ENCODE measurements at regions of chr2 and their contacts with region 1.

Region 1: DNA sequence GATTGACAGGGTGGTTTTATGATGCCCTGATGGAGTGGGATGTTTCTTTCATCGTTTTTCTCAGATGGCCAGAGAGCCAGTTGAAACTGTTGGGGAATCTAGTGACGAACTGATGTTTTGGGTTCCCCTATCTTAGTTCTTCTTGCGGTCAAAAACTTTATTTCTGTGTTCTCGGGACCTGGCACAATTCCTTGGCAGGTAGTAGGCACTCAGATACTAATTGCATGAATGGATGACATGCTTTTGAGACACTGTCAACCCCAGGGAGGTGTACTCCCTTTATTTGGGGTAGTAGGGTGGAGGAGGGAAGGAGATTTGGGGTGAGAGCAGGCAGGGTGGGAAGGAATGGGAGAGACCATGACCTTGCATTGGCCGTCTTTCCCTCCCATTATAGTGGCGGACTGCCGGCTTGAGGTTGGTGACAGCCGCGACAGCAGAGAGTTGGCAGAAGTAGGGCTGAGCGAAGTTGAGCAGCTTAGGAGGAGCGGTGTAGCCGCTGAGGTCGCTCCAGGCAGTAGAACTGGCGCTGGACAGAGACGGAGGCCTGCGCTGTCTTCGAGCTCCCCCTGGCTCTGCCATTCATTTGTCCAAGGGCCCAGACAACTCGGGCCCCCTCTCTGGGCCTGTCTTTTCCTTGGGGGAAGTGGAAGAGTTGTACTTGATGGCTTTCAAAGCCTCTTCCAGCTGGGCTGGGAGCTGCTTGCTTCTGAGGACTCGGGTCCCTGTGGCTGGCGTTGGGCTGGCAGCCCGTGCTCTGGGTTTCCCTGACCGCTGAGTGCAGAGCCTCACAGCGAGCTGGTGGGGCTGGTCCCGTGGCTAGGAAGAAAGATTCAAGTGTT is 2.6 kb downstream of the TET3 start:
- DNase-seq: peak; percentile 63
- H3K4me3 Mint-ChIP-seq: peak overlapping the region; percentile 77
- H3K27ac Mint-ChIP-seq: peak overlapping the region; percentile 34
- H3K4me1 Mint-ChIP-seq: peaks cover 68% of the 10 kb centered on the region
- H3K27me3 Mint-ChIP-seq: peaks cover 19% of the 10 kb centered on the region

Region 2: DNA sequence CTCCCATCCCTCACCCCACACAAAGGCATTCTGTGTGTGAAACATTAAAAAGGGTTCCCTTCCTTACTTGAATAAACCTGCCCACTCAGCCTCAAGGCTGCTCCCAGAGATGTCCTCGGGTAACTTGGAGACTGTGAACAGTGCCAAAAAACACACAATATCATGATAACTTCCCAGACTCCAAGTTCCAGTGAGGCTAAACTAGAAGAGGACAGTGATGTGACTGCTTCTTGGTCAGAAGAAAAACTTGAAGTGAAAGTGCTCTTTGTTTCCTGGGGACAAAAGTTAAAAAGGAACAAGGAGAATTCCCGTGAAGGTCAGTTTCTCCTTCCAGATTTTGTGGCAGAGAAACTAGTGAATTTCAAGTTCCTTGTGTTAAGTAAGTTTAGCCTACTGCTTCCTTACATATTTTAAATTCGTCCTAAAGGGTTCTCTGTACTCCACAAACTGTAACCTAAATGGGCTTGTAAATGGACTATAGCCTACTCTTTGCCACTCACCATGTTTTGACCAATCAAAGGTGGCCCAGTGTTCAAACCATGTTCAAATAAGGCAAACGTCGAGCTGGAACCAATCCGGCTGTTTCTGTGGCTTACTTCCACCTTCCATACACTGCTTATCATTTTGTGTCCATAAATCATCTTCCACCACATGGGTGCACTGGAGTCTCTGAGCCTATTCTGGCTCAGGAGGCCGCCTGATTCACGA is 270.6 kb before region 1 on chr2:
- CTCF ChIA-PET with region 1: no interaction called
- DNase-seq: no peak
- H3K4me3 Mint-ChIP-seq: no peak overlapping the region
- H3K27ac Mint-ChIP-seq: no peak overlapping the region
- H3K4me1 Mint-ChIP-seq: no peaks in the 10 kb centered on the region
- H3K27me3 Mint-ChIP-seq: peaks cover 19% of the 10 kb centered on the region

Region 3: DNA sequence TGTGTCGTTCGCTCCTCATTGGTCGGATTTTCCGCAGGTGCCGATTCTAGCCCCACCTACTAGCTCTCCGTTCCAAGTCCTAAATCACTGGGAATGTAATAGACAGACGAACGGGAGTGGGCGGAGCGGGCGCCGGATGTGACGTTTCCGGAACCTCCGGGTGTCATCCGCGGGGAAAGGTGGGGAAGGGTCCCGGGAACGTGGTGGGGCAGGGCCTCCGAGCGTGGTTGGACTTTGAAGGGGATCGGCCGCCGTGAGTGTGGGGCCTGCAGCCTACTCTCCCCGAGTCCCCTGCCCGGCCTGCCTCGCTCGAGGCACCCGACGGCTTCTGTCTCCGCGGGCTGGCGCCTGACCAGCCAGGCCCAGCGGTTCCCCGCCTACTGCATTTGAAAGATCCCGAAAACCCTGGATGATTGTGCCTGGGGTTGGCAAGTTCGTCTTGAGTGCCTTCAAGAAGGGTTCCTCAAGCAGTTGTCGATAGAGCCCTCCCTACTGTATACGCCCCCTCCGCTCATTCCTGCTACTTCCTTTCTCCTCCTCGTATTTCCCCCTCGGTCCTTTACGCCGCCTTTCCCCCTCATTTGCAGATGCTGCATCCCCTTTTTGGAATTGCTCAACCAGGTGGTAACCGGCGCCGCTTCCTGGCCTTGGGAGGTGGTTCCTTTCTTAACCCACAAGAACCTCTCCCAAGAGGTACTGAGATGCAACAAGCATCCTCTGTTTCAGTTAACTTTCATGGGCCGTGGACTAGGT is 158.3 kb before region 1 on chr2 and contains the start of gene STAMBP:
- CTCF ChIA-PET with region 1: interaction called, 50 read pairs
- DNase-seq: peak; percentile 97
- H3K4me3 Mint-ChIP-seq: peak within 1 kb of the TSS; percentile 91
- H3K27ac Mint-ChIP-seq: peak within 1 kb of the TSS; percentile 94
- H3K4me1 Mint-ChIP-seq: peaks cover 40% of the 10 kb centered on the region
- H3K27me3 Mint-ChIP-seq: peaks cover 4% of the 10 kb centered on the region

Region 4: GRCh38 chr2:73920577-73921545 is 66.5 kb before region 1 on chr2:
- CTCF ChIA-PET with region 1: interaction called, 13 read pairs
- DNase-seq: peak; percentile 58
- H3K4me3 Mint-ChIP-seq: no peak overlapping the region
- H3K27ac Mint-ChIP-seq: no peak overlapping the region
- H3K4me1 Mint-ChIP-seq: peaks cover 18% of the 10 kb centered on the region
- H3K27me3 Mint-ChIP-seq: peaks cover 36% of the 10 kb centered on the region

Region 5: GRCh38 chr2:74001781-74002486 is 14.6 kb after region 1 on chr2:
- CTCF ChIA-PET with region 1: interaction called, 13 read pairs
- DNase-seq: no peak
- H3K4me3 Mint-ChIP-seq: peak overlapping the region; percentile 70
- H3K27ac Mint-ChIP-seq: no peak overlapping the region
- H3K4me1 Mint-ChIP-seq: peaks cover 59% of the 10 kb centered on the region
- H3K27me3 Mint-ChIP-seq: peaks cover 13% of the 10 kb centered on the region

Region 6: GRCh38 chr2:74147727-74148456 is 160.6 kb after region 1 on chr2 and contains the start of gene BOLA3:
- CTCF ChIA-PET with region 1: interaction called, 12 read pairs
- DNase-seq: peak; percentile 89
- H3K4me3 Mint-ChIP-seq: no peak within 1 kb of the TSS
- H3K27ac Mint-ChIP-seq: no peak within 1 kb of the TSS
- H3K4me1 Mint-ChIP-seq: peaks cover 8% of the 10 kb centered on the region
- H3K27me3 Mint-ChIP-seq: no peaks in the 10 kb centered on the region

Region 7: GRCh38 chr2:74212702-74213410 is 225.5 kb after region 1 on chr2:
- CTCF ChIA-PET with region 1: no interaction called
- DNase-seq: no peak
- H3K4me3 Mint-ChIP-seq: no peak overlapping the region
- H3K27ac Mint-ChIP-seq: no peak overlapping the region
- H3K4me1 Mint-ChIP-seq: peaks cover 13% of the 10 kb centered on the region
- H3K27me3 Mint-ChIP-seq: no peaks in the 10 kb centered on the region

Measured in activated naive CD4-positive, alpha-beta T cell treated with anti-CD3 and anti-CD28 coated beads, Interleukin-2, amount 10 ng/mL, durations not matched to agents 7 days and 5 days (primary cell).